ENCODE measurements at regions of chr19 and their contacts with region 1.

Region 1: DNA sequence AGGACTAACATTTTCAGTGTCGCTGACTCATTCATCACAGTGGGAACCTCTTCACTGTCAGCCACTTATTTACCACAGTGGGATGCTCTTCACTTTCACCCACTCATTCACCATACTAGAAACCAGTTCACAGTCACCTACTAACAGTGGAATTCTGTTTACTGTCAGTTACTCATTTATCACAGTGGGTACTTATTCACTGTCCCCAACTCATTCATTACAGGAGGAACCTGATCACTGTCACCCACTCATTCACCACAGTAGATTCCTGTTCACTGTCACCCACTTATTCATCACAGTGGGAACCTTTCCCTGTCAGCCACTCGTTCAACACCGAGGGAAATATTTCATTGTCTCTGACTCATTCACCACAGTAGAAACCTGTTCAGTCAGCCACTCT is 10.1 kb upstream of the ZNF85 start:
- DNase-seq: no peak
- ATAC-seq: no peak

Region 2: DNA sequence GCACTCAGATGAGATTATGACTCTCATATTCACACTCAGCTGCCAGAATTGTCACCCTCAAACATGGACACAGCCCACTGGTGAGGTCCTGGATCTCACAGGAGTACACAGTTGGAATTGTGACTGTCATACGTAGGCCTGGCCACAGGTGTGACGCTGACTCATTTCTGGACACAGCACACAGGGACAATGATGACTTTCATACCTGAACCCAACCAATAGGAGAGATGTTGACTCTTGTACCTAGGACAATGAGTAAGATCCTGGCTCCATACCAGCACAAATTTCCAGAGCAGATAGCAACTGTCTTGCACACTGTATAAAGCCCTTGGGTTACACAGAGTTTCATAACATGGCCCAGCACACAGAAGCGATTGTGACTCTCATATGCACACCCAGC is 56.5 kb after region 1 on chr19:
- intact Hi-C with region 1: loop called (anchors 2 kb)
- DNase-seq: no peak
- ATAC-seq: no peak